ENCODE measurements at regions of chr5 and their contacts with region 1.

Region 1: DNA sequence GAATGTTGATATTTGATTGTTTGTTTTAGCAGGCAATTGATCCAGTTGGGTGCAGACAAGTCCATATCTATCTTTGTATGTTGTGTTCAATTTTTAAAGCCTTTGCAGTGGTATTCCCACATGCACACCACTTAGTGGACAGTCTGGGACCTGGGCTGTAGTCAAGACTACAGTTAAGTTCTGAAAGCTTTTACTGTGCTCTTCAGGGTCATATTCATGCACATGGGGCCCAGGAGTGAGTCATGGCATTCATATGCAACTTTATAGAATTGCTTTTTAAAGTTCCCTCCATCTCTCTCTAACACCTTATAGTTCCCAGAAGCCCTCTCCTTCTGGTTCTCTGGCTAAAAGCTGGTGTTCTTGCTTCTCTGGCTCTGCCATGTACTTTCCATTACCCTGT is 228.2 kb upstream of the CCNH start:
- DNase-seq: no peak
- ATAC-seq: no peak
- H3K4me3 ChIP-seq: no peak overlapping the region
- H3K27ac ChIP-seq: no peak overlapping the region
- H3K4me1 ChIP-seq: no peaks in the 10 kb centered on the region
- H3K27me3 ChIP-seq: no peaks in the 10 kb centered on the region
- CTCF ChIP-seq: no peak
- POLR2A ChIP-seq: no peak
- RAD21 ChIP-seq: no peak

Region 2: DNA sequence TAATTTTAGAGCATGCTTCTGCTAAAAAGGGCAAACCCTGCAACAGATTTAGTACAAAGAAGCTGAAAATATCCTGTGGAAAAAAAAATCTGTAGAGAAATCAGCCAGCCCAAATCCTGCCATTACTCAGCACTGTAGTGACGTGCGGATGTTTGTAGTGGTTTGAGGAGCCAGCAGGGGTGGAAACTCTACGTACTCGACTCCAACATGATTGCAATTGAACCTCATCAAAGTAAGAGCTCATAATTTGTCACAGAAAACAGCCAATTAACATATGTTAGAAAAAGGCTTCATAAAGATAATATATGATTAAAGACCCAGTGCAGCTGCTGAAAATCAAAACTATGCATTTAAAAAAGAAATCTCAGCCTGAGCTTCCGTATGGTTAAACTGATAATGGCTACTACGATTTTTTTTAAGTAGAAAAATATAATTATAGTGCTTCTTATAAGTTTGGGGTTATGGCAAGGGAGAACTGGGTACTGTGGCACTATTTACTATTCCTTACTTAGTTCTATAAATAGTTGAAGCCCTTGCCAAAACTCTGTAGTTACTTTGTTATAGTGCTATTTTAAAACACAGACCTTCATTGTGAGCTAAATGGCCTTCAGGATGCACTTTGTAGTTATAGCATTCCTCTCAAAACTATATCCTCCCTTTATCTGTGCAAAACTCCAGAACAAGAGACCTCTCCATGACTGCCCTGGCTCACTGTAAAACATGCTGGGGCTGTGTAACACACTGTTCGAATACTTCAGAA is 1192.6 kb after region 1 on chr5:
- CTCF ChIA-PET with region 1: no interaction called
- POLR2A ChIA-PET with region 1: no interaction called
- dilution Hi-C with region 1: no loop called
- in situ Hi-C with region 1: no loop called
- intact Hi-C with region 1: loop called (anchors 5 kb)
- DNase-seq: peak; percentile 74
- ATAC-seq: peak; percentile 79
- H3K4me3 ChIP-seq: no peak overlapping the region
- H3K27ac ChIP-seq: no peak overlapping the region
- H3K4me1 ChIP-seq: peaks cover 5% of the 10 kb centered on the region
- H3K27me3 ChIP-seq: no peaks in the 10 kb centered on the region
- CTCF ChIP-seq: no peak
- POLR2A ChIP-seq: no peak
- RAD21 ChIP-seq: no peak

Measured in IMR-90 (cell line).